ENCODE measurements at regions of chr11 and their contacts with region 1.

Region 1: GRCh38 chr11:46778416-46778815 is 59.4 kb downstream of the F2 start:
- DNase-seq: no peak
- ATAC-seq: no peak
- H3K4me3 Mint-ChIP-seq: no peak overlapping the region
- H3K27ac Mint-ChIP-seq: no peak overlapping the region
- H3K4me1 Mint-ChIP-seq: no peaks in the 10 kb centered on the region
- H3K27me3 Mint-ChIP-seq: no peaks in the 10 kb centered on the region

Region 2: GRCh38 chr11:46710821-46711269 is 67.6 kb before region 1 on chr11:
- CTCF ChIA-PET with region 1: no interaction called
- POLR2A ChIA-PET with region 1: no interaction called
- intact Hi-C with region 1: no loop called
- DNase-seq: no peak
- ATAC-seq: no peak
- H3K4me3 Mint-ChIP-seq: no peak overlapping the region
- H3K27ac Mint-ChIP-seq: no peak overlapping the region
- H3K4me1 Mint-ChIP-seq: no peaks in the 10 kb centered on the region
- H3K27me3 Mint-ChIP-seq: no peaks in the 10 kb centered on the region

Region 3: DNA sequence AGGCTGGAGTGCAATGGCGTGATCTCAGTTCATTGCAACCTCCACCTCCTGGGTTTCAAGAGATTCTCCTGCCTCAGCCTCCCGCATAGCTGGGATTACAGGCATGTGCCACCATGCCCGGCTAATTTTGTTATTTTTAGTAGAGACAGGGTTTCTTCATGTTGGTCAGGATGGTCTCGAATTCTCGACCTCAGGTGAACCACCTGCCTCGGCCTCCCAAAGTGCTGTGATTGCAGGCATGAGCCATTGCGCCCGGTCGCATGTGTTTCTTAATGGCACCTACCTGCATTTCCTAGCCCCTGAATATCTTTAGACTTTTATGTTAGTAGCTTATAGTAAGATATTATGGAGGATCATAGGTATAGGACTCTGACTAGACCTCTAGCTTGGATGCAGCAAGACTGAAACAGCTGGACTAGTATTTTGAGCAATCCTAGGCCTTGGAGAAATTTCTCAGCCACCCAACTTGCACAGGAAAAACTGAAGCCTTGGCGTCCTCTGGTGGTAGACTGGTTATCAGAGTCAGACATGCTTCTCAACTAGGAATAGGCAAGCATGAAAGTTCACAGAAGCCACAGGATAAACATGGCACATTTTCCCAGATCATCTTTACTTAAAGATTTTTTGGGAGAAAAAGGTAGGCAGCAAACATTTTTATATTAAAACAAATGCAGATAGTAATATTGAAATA is 838.5 kb after region 1 on chr11:
- CTCF ChIA-PET with region 1: no interaction called
- POLR2A ChIA-PET with region 1: no interaction called
- intact Hi-C with region 1: loop called in 1 of 2 experiments (anchors 10 kb)
- DNase-seq: peak; percentile 54
- ATAC-seq: peak; percentile 60
- H3K4me3 Mint-ChIP-seq: no peak overlapping the region
- H3K27ac Mint-ChIP-seq: no peak overlapping the region
- H3K4me1 Mint-ChIP-seq: no peaks in the 10 kb centered on the region
- H3K27me3 Mint-ChIP-seq: no peaks in the 10 kb centered on the region

Measured in activated CD4-positive, alpha-beta T cell treated with anti-CD3 and anti-CD28 coated beads for 36 hours (primary cell).